CD8-positive, alpha-beta T cell (primary cell): ENCODE measurements at regions of chr16 and their contacts with region 1.

Region 1: GRCh38 chr16:68022704-68023522 is at the starts of genes DDX28 and DUS2:
- DNase-seq: peak; percentile 89 to 98 (median 94)
- ATAC-seq: peak; percentile 95
- H3K4me3 ChIP-seq: peak within 1 kb of the TSS; percentile 92 to 97
- H3K4me3 Mint-ChIP-seq: peak within 1 kb of the TSS; percentile 98
- H3K27ac ChIP-seq: peak within 1 kb of the TSS; percentile 86 to 88
- H3K27ac Mint-ChIP-seq: peak within 1 kb of the TSS; percentile 95
- H3K4me1 ChIP-seq: peaks cover 28% of the 10 kb centered on the region
- H3K4me1 Mint-ChIP-seq: peaks cover 36% of the 10 kb centered on the region
- H3K27me3 ChIP-seq: no peaks in the 10 kb centered on the region
- H3K27me3 Mint-ChIP-seq: no peaks in the 10 kb centered on the region
- CTCF ChIP-seq: no peak
- total RNA-seq, gene DDX28: 18.5 to 20.9 TPM
- total RNA-seq, gene DUS2: 9.5 TPM

Region 2: DNA sequence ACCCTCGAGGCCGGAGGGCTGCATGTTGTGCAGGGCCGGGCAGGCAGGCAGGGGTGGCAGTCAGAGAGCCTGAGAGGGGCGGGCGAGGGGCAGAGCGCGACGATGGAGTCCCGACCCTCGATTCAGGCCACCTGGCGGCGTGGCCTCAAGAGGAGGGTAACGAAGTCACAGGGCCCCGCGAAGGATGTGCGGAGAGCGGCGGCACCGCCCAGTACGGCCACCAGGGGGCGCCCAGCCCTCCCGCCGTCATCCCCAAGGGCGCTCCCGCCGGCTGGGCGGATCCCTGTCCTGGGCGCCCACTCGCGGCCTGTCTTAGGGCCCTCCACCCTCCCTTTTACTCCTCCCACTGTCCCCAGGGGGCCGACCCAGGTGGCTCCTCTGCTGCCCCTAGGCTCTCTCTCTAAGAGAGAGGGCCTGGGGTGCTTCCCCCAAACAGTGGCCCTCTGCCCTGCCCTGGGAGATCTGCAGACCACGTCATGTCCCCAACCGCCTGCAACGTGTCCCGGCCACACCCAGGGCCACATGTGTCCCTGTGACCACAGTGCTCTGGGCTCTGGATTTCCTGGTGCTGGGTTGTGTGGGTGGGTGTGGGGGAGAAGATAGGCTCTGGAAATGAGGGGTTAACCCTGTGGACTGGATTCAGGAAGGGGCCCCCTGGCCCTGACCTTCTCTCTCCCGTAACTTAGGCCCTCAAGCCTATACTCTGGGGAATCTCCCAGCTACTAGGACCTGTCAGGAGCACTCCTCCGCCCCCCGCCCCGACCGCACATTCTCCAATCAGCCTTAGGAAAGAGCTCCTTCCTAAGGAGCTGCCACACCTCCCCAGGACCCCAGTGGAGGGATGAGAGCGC is 29.5 kb before region 1 on chr16:
- CTCF ChIA-PET with region 1: interaction called, 14 read pairs
- POLR2A ChIA-PET with region 1: interaction called, 45 read pairs
- intact Hi-C with region 1: loop called (anchors 1 kb)
- DNase-seq: peak; percentile 70 to 91 (median 79)
- ATAC-seq: peak; percentile 92
- H3K4me3 ChIP-seq: peak overlapping the region; percentile 38 to 41
- H3K4me3 Mint-ChIP-seq: peak overlapping the region; percentile 83
- H3K27ac ChIP-seq: peak overlapping the region; percentile 52 to 87
- H3K27ac Mint-ChIP-seq: peak overlapping the region; percentile 95
- H3K4me1 ChIP-seq: peaks cover 34% of the 10 kb centered on the region
- H3K4me1 Mint-ChIP-seq: peaks cover 34% of the 10 kb centered on the region
- H3K27me3 ChIP-seq: no peaks in the 10 kb centered on the region
- H3K27me3 Mint-ChIP-seq: no peaks in the 10 kb centered on the region
- CTCF ChIP-seq: peak; percentile 87

Region 3: DNA sequence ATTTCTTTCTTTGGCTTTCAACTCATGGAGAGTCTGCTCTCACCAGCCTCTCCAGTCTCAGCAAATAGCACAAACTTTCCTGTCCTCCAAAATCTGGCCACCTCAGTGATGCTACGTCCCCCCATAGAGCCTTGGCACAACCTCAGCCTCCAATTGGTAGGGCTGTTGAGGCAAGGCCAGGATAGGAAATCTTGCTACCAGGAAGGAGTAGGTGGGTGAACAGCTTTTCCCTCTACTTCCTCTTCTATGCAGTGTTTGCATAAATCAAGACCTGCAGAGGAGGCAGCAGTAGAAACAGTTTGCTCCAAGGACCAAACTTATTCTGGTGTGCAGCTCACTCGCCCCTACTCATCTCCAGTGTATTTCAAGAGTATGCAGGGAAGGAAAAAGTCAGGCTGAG is 22.9 kb before region 1 on chr16:
- CTCF ChIA-PET with region 1: interaction called, 14 read pairs
- POLR2A ChIA-PET with region 1: interaction called, 45 read pairs
- intact Hi-C with region 1: no loop called
- DNase-seq: peak in 1 of 9 experiments; percentile 34
- ATAC-seq: no peak
- H3K4me3 ChIP-seq: peak overlapping the region; percentile 44 to 48
- H3K4me3 Mint-ChIP-seq: peak overlapping the region; percentile 87
- H3K27ac ChIP-seq: peak overlapping the region; percentile 60 to 73
- H3K27ac Mint-ChIP-seq: peak overlapping the region; percentile 97
- H3K4me1 ChIP-seq: peaks cover 53% of the 10 kb centered on the region
- H3K4me1 Mint-ChIP-seq: peaks cover 64% of the 10 kb centered on the region
- H3K27me3 ChIP-seq: no peaks in the 10 kb centered on the region
- H3K27me3 Mint-ChIP-seq: no peaks in the 10 kb centered on the region
- CTCF ChIP-seq: no peak

Region 4: DNA sequence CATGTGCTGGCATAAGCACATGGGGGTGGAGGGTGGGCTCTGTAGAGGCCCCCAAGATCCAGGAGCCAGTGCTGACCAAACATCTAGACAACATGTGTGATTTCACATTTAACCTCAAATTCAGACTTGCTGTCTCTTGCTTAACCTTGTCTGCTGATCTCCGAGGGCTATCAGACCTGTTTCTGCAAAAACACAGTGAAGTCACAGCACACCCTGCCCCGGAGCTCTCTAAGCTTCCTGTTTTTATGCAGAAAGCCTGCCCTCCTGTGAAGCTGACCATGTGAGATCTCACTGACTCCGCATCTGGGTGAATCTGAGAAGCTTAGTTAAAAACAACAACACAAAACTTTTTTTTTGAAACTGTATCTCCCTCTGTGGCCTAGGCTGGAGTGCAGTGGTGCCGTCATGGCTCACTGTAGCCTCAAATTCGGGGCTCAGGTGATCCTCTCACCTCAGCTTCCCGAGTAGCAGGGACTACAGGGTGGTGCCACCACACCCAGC is 17.1 kb before region 1 on chr16:
- CTCF ChIA-PET with region 1: interaction called, 7 read pairs
- POLR2A ChIA-PET with region 1: interaction called, 45 read pairs
- intact Hi-C with region 1: no loop called
- DNase-seq: peak; percentile 39 to 85 (median 67)
- ATAC-seq: peak; percentile 96
- H3K4me3 ChIP-seq: no peak overlapping the region
- H3K4me3 Mint-ChIP-seq: peak overlapping the region; percentile 51
- H3K27ac ChIP-seq: peak overlapping the region; percentile 75 to 85
- H3K27ac Mint-ChIP-seq: peak overlapping the region; percentile 99
- H3K4me1 ChIP-seq: peaks cover 33% of the 10 kb centered on the region
- H3K4me1 Mint-ChIP-seq: peaks cover 39% of the 10 kb centered on the region
- H3K27me3 ChIP-seq: no peaks in the 10 kb centered on the region
- H3K27me3 Mint-ChIP-seq: no peaks in the 10 kb centered on the region
- CTCF ChIP-seq: no peak